ENCODE measurements at regions of chr1 and their contacts with region 1.

Region 1: DNA sequence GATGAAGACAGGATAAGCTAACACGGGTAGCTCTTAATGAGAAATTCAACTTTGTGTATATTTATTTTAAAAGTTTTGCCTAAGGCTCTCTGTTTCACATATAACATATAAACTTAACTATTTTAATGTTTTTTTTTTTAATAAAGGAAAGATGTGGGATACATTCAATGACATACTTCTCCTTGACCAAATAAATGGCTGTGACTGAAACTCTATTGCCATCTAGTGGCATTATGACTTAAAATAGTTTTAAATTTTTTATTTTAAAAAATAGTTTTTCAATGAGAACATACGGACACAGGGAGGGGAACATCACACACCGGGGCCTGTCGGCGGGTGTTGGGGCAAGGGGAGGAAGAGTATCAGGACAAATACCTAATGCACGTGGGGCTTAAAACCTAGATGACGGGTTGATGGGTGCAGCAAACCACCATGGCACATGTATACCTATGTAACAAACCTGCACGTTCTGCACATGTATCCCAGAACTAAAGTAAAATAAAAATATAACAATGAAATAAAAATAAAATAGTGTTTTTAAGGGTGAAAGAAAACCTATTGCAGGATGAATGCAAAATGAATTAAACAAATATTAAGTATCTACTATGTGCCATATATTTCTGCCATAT is 83.4 kb downstream of the LYST start:
- DNase-seq: peak; percentile 52
- H3K4me3 ChIP-seq: no peak overlapping the region
- H3K27ac ChIP-seq: no peak overlapping the region
- H3K4me1 ChIP-seq: no peaks in the 10 kb centered on the region
- H3K27me3 ChIP-seq: no peaks in the 10 kb centered on the region
- CTCF ChIP-seq: peak in 1 of 2 donors; percentile 13
- POLR2A ChIP-seq: no peak

Region 2: GRCh38 chr1:235105051-235106043 is 677.9 kb before region 1 on chr1:
- CTCF ChIA-PET with region 1: no interaction called
- POLR2A ChIA-PET with region 1: no interaction called
- dilution Hi-C with region 1: no loop called
- intact Hi-C with region 1: loop called (anchors 2 kb)
- DNase-seq: peak; percentile 46
- H3K4me3 ChIP-seq: no peak overlapping the region
- H3K27ac ChIP-seq: no peak overlapping the region
- H3K4me1 ChIP-seq: peaks cover 3% of the 10 kb centered on the region
- H3K27me3 ChIP-seq: no peaks in the 10 kb centered on the region
- CTCF ChIP-seq: no peak
- POLR2A ChIP-seq: no peak

Region 3: GRCh38 chr1:235557495-235557894 is 225.8 kb before region 1 on chr1:
- CTCF ChIA-PET with region 1: interaction called, 9 read pairs
- POLR2A ChIA-PET with region 1: no interaction called
- dilution Hi-C with region 1: no loop called
- intact Hi-C with region 1: loop called (anchors 1 kb)
- DNase-seq: no peak
- H3K4me3 ChIP-seq: no peak overlapping the region
- H3K27ac ChIP-seq: no peak overlapping the region
- H3K4me1 ChIP-seq: no peaks in the 10 kb centered on the region
- H3K27me3 ChIP-seq: no peaks in the 10 kb centered on the region
- CTCF ChIP-seq: peak; percentile 11 to 15
- POLR2A ChIP-seq: no peak

Region 4: GRCh38 chr1:235758931-235759330 is 24.3 kb before region 1 on chr1:
- CTCF ChIA-PET with region 1: interaction called, 11 read pairs
- POLR2A ChIA-PET with region 1: no interaction called
- dilution Hi-C with region 1: no loop called
- intact Hi-C with region 1: no loop called
- DNase-seq: no peak
- H3K4me3 ChIP-seq: no peak overlapping the region
- H3K27ac ChIP-seq: no peak overlapping the region
- H3K4me1 ChIP-seq: no peaks in the 10 kb centered on the region
- H3K27me3 ChIP-seq: no peaks in the 10 kb centered on the region
- CTCF ChIP-seq: no peak
- POLR2A ChIP-seq: no peak

Region 5: GRCh38 chr1:235843461-235843961 is 60.2 kb after region 1 on chr1:
- CTCF ChIA-PET with region 1: interaction called, 14 read pairs
- POLR2A ChIA-PET with region 1: no interaction called
- dilution Hi-C with region 1: no loop called
- intact Hi-C with region 1: no loop called
- DNase-seq: peak; percentile 24
- H3K4me3 ChIP-seq: no peak overlapping the region
- H3K27ac ChIP-seq: no peak overlapping the region
- H3K4me1 ChIP-seq: no peaks in the 10 kb centered on the region
- H3K27me3 ChIP-seq: no peaks in the 10 kb centered on the region
- CTCF ChIP-seq: peak in 1 of 2 donors; percentile 16
- POLR2A ChIP-seq: no peak